ENCODE measurements at regions of chr14 and their contacts with region 1.

Region 1: DNA sequence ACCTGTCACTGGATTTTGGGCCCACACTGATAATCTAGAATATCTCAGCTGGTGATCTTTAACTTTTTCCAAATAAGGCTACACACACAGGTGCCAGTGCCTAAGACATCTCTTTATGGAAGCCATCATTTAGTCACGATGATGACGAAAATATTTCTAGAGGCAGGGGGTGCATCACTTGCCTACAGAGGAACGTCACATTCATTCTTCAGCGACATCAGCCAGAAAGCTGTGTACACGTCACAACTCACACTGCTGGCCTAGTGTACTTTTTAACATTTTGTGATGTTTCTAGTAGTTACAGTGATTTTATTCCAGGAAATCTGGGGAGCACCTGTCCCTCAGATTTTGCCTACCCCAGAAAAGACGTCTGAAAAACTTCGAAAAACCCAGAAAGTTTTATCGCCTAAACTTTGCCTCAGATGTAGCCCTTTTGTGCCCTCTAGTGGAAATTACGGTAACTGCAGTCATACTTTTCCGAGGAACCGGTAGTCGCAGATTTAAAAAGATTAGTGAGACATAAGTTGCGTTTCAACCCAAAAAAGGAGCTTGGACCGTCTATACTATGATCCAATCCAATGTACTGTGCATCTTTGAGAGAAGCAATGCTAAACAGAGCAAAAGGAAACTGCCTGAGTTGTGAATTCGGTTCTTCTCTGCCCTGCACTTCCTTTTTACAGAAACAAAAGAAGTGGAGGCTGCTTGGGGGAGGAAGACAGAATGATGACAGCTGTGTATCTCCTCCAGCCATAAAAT is 64.3 kb upstream of the STON2 start:
- DNase-seq: peak; percentile 60 to 63
- ATAC-seq: peak; percentile 67 to 80
- H3K4me3 ChIP-seq: peak overlapping the region; percentile 41
- H3K27ac ChIP-seq: peak overlapping the region; percentile 71 to 82
- H3K4me1 ChIP-seq: no peaks in the 10 kb centered on the region
- CTCF ChIP-seq: peak; percentile 92
- EP300 ChIP-seq: no peak
- POLR2A ChIP-seq: no peak
- RAD21 ChIP-seq: peak; percentile 83 to 90

Region 2: GRCh38 chr14:81246461-81247145 is 217.8 kb before region 1 on chr14:
- CTCF ChIA-PET with region 1: interaction called, 11 read pairs
- POLR2A ChIA-PET with region 1: no interaction called
- DNase-seq: no peak
- ATAC-seq: no peak
- H3K4me3 ChIP-seq: no peak overlapping the region
- H3K27ac ChIP-seq: no peak overlapping the region
- H3K4me1 ChIP-seq: no peaks in the 10 kb centered on the region
- CTCF ChIP-seq: no peak
- EP300 ChIP-seq: no peak
- POLR2A ChIP-seq: no peak
- RAD21 ChIP-seq: no peak

Region 3: GRCh38 chr14:81276073-81277069 is 188.1 kb before region 1 on chr14:
- CTCF ChIA-PET with region 1: interaction called, 112 read pairs
- POLR2A ChIA-PET with region 1: no interaction called
- DNase-seq: no peak
- ATAC-seq: no peak
- H3K4me3 ChIP-seq: no peak overlapping the region
- H3K27ac ChIP-seq: no peak overlapping the region
- H3K4me1 ChIP-seq: no peaks in the 10 kb centered on the region
- CTCF ChIP-seq: no peak
- EP300 ChIP-seq: no peak
- POLR2A ChIP-seq: no peak
- RAD21 ChIP-seq: no peak

Region 4: DNA sequence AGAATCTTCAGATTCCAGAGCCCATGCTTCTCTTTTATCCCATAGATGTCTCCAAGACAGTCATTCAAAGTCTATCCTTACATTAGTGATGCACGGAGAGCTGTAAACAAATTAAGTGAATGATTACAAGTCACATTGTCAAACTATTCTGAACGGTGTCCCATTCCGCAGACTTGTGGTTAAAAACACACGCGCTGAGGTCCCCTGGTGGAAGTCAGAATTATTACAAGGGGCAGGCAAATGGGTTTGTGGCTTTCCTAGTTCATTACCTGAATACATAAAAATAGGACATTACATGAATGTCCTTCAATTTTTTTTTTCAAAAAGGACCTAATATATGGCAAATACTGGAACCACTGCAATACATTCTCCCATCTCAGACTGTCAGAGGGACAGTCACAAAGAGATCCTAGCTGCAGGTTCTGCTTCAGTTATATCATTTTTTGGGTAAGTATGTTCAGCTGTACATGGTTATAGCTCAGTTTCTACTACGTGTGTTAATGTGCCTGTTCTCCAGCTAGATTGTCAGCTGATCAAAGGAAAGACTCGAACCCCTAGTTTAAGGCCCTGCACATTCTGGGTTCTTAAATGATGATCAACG is 11.2 kb before region 1 on chr14:
- CTCF ChIA-PET with region 1: interaction called, 60 read pairs
- POLR2A ChIA-PET with region 1: no interaction called
- DNase-seq: peak; percentile 41 to 60
- ATAC-seq: peak; percentile 79 to 87
- H3K4me3 ChIP-seq: no peak overlapping the region
- H3K27ac ChIP-seq: no peak overlapping the region
- H3K4me1 ChIP-seq: no peaks in the 10 kb centered on the region
- CTCF ChIP-seq: peak; percentile 80
- EP300 ChIP-seq: no peak
- POLR2A ChIP-seq: no peak
- RAD21 ChIP-seq: peak; percentile 80 to 82

Measured in A549 (cell line).